PC-3 (cell line): ENCODE measurements at regions of chr14 and their contacts with region 1.

Region 1: DNA sequence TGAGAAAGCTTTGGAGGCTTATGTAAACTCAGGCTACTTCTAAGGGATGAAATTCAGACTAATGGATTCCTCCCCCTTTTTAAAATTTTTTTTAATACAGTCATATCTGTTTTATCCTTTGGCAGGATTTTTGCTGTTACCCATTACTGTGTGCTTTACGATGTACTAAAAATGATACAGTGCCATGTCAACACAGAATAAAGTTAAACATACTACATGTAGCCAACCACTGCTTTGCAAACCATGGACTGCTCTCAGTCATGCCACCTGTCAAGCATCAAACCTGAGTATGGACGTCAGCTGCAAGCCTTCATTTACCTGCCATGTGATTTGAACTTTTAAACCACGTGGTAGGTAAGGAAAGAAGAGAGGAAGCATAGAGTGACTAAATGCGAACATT is 325.8 kb downstream of the FUT8 start:
- DNase-seq: no peak
- ATAC-seq: peak; percentile 65
- H3K4me3 ChIP-seq: no peak overlapping the region
- H3K27ac ChIP-seq: no peak overlapping the region
- H3K4me1 ChIP-seq: no peaks in the 10 kb centered on the region
- H3K27me3 ChIP-seq: no peaks in the 10 kb centered on the region
- CTCF ChIP-seq: no peak

Region 2: DNA sequence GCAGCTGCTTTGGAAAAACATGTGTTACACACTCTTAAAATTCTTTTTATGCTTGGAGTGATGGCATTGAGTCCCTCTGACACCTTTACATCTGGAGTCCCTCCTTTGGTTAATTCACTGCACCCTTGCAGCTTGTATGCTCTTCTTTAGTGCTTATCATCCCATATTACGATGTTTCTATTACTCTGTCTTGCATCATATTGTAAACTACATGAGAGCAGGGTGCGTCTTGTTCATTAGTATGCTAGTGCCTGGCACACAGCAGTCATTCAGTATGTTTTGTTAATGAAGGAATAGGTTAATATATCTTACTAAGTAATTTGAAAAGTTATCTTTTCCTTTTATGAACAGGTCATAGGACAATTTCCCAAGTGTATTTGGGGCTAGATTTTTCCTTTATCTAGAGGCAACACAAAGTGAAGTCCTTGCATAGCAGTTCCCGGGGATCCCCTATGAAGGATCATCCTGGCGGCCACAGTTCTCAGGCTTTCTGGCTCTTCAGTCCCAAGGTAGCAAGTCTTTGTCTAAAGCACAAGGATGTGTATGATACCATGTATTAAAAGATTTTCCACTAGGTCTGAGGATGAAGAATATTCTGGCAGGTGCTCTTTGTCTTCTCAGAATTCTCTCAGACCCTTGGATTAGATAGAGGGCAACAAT is 38.0 kb after region 1 on chr14:
- CTCF ChIA-PET with region 1: no interaction called
- POLR2A ChIA-PET with region 1: no interaction called
- intact Hi-C with region 1: loop called (anchors 2 kb)
- DNase-seq: no peak
- ATAC-seq: peak; percentile 51
- H3K4me3 ChIP-seq: no peak overlapping the region
- H3K27ac ChIP-seq: no peak overlapping the region
- H3K4me1 ChIP-seq: peaks cover 15% of the 10 kb centered on the region
- H3K27me3 ChIP-seq: no peaks in the 10 kb centered on the region
- CTCF ChIP-seq: no peak